ENCODE measurements at regions of chr12 and their contacts with region 1.

Region 1: GRCh38 chr12:10673660-10674384 is at the start of gene STYK1:
- DNase-seq: peak; percentile 63 to 73 (median 66)
- ATAC-seq: peak; percentile 87
- H3K4me3 ChIP-seq: peak within 1 kb of the TSS; percentile 57
- H3K27ac ChIP-seq: peak within 1 kb of the TSS; percentile 52; the same call in 2 of the 3 replicates
- H3K4me1 ChIP-seq: peaks cover 3 to 4% of the 10 kb centered on the region in 2 experiments; a peak in 4 of 5 replicates
- H3K27me3 ChIP-seq: no peaks in the 10 kb centered on the region
- CTCF ChIP-seq: peak; percentile 76 to 89 (median 77)
- EP300 ChIP-seq: peak; percentile 14; the same call in 1 of the 2 replicates
- POLR2A ChIP-seq: no peak
- RAD21 ChIP-seq: peak; percentile 61 to 79
- polyA plus RNA-seq, gene STYK1: 0.44 to 0.67 TPM

Region 2: DNA sequence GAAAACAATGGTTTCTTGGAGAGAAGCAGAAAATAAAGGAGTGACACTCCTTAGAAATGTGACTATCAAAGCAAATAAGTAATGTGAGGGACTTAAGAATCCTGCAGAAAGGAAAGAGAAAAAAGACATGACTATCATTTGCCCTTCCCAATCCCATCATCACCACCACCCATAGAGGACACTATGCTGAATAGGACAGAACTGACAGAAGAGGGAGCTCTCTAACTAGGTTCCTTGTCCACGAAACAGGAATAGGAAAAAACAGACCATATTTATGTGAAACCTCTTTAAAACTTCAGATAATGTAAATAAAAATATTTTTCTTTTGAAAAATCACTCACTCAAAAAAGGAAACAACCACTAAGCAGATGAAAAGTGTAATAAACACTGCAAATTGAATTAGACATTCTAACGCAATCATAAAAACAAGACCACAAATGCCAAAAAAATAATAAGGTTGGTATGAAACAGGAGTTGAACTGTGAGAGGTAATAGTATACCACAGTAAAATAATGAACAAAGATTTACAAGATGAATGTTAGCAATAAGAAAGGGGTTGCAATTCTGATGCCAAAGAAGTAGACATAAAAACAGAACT is 342.1 kb before region 1 on chr12:
- CTCF ChIA-PET with region 1: interaction called, 9 read pairs
- POLR2A ChIA-PET with region 1: no interaction called
- in situ Hi-C with region 1: no loop called
- intact Hi-C with region 1: loop called (anchors 1 kb)
- DNase-seq: peak; percentile 17 to 56 (median 34)
- ATAC-seq: peak; percentile 81
- H3K4me3 ChIP-seq: no peak overlapping the region
- H3K27ac ChIP-seq: no peak overlapping the region
- H3K4me1 ChIP-seq: no peaks in the 10 kb centered on the region
- H3K27me3 ChIP-seq: no peaks in the 10 kb centered on the region
- CTCF ChIP-seq: peak; percentile 56 to 89 (median 82); a peak in 5 of 6 replicates
- EP300 ChIP-seq: no peak
- POLR2A ChIP-seq: no peak
- RAD21 ChIP-seq: peak; percentile 84 to 91

Region 3: GRCh38 chr12:10562306-10562933 is 111.4 kb before region 1 on chr12:
- CTCF ChIA-PET with region 1: no interaction called
- POLR2A ChIA-PET with region 1: no interaction called
- in situ Hi-C with region 1: no loop called
- intact Hi-C with region 1: loop called (anchors 5 kb)
- DNase-seq: peak; percentile 10 to 41 (median 12)
- ATAC-seq: no peak
- H3K4me3 ChIP-seq: no peak overlapping the region
- H3K27ac ChIP-seq: no peak overlapping the region
- H3K4me1 ChIP-seq: no peaks in the 10 kb centered on the region
- H3K27me3 ChIP-seq: no peaks in the 10 kb centered on the region
- CTCF ChIP-seq: peak in 2 of 3 experiments; percentile 50 to 74; a peak in 3 of 6 replicates
- EP300 ChIP-seq: no peak
- POLR2A ChIP-seq: no peak
- RAD21 ChIP-seq: peak; percentile 80 to 86

Region 4: DNA sequence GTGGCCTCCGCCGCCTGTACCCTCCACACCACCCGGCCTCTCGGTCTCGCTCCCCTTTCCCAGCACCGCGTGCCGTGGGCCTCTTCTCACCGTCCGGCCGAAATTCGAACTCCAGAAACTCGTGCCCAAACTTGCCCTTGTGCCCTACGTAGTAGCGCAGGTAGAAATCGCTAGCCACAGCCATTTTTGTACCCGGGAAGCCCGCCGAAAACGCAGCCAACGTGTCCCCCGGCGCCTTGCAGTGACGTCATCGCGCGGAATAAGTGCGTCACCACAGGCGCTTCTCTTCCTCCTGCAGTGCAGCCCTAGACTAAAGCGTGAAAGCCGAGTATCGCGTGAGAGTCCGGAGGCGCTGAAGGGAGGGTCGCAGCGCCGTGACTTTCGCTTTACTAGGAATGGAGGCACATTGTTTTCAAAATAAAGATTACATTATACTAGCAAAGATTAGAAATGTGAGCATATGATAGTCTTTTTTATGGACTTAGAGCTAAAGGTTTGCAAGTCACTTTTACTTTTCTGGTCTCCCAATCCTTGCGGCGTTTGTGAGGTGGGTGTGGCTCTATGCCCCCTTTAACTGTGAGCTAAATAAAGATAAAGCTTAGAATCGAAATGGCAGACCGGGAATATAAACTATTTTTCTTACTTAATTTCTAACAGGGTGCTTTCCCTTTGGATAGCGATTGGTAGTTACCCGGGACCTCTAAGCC is 60.3 kb before region 1 on chr12 and contains the start of gene MAGOHB:
- CTCF ChIA-PET with region 1: no interaction called
- POLR2A ChIA-PET with region 1: no interaction called
- in situ Hi-C with region 1: no loop called
- intact Hi-C with region 1: loop called (anchors 2 kb)
- DNase-seq: peak; percentile 77 to 95 (median 78)
- ATAC-seq: peak; percentile 93
- H3K4me3 ChIP-seq: peak within 1 kb of the TSS; percentile 73
- H3K27ac ChIP-seq: peak within 1 kb of the TSS; percentile 95
- H3K4me1 ChIP-seq: peaks cover 0 to 7% of the 10 kb centered on the region in 2 experiments; a peak in 3 of 5 replicates
- H3K27me3 ChIP-seq: no peaks in the 10 kb centered on the region
- CTCF ChIP-seq: no peak
- EP300 ChIP-seq: no peak; the same call in 1 of the 2 replicates
- POLR2A ChIP-seq: peak; percentile 84
- RAD21 ChIP-seq: no peak
- polyA plus RNA-seq, gene MAGOHB: 168 to 177 TPM

Region 5: DNA sequence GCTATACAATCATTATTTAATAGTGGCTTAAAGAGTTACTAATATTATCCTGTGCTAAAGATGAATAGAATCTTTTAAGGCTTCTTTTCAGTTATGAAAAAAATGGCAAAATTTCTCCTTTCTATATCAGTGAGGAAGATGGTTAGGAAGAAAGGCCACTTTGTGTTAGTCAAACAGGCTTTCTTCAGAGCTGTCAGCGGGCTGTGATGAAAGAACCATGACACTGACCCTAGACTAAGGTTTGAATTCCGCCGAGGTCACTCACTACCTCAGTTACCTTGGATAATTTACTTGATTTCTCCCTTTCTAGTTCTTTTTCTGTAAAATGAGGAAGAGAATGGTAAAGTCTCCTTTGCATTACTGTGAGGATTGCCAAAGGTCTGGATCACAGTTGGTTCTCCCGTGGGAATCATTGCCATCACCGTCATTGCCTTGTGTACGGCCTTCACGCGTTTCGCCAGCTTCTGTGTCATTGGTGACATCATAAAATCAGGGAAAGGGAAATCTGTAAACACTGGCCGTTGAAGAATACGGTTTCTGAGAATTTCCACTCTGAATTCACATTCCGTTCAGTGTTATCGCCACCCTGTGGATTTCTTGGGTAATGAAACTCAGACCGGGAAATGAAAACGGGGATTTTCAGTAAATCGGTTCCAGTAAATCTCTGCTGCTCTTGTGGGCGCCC is 76.0 kb after region 1 on chr12:
- CTCF ChIA-PET with region 1: interaction called, 9 read pairs
- POLR2A ChIA-PET with region 1: no interaction called
- in situ Hi-C with region 1: no loop called
- intact Hi-C with region 1: loop called (anchors 2 kb)
- DNase-seq: peak; percentile 22 to 79 (median 46)
- ATAC-seq: peak; percentile 86
- H3K4me3 ChIP-seq: no peak overlapping the region
- H3K27ac ChIP-seq: no peak overlapping the region
- H3K4me1 ChIP-seq: no peaks in the 10 kb centered on the region; a peak in 2 of 5 replicates
- H3K27me3 ChIP-seq: peaks cover 0 to 6% of the 10 kb centered on the region in 2 experiments; a peak in 2 of 5 replicates
- CTCF ChIP-seq: peak; percentile 86 to 97 (median 95)
- EP300 ChIP-seq: peak; percentile 38; the same call in 1 of the 2 replicates
- POLR2A ChIP-seq: no peak
- RAD21 ChIP-seq: peak; percentile 70 to 86

Measured in K562 (cell line).